ENCODE measurements at regions of chr9 and their contacts with region 1.

Region 1: DNA sequence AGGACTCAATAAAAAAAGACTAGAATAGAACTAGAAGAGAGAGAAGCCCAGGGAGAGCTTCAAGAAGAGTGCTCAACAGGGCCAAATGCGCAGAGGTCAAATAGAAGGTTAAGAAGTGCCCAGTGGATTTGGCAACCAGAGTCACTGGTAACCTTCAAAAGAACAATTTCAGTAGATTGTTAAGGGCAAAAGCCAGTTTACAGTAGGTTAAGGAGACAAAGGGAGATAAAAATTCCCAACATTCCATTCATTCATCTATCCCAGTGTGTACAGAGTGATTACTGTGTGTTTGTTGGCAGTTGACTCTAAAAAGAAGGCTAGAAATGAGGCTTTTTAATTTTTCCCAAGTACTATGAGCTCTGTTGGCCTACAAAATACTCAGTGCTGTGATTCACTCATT is 69.4 kb downstream of the RIGI start:
- DNase-seq: no peak
- H3K4me3 ChIP-seq: no peak overlapping the region
- H3K4me3 Mint-ChIP-seq: no peak overlapping the region
- H3K27ac ChIP-seq: no peak overlapping the region
- H3K27ac Mint-ChIP-seq: no peak overlapping the region
- H3K4me1 ChIP-seq: no peaks in the 10 kb centered on the region
- H3K4me1 Mint-ChIP-seq: peaks cover 0 to 2% (median 0%) of the 10 kb centered on the region in 4 donors
- H3K27me3 ChIP-seq: no peaks in the 10 kb centered on the region
- H3K27me3 Mint-ChIP-seq: no peaks in the 10 kb centered on the region

Region 2: GRCh38 chr9:32344551-32345182 is 111.9 kb before region 1 on chr9:
- CTCF ChIA-PET with region 1: no interaction called
- POLR2A ChIA-PET with region 1: no interaction called
- intact Hi-C with region 1: no loop called
- DNase-seq: no peak
- H3K4me3 ChIP-seq: no peak overlapping the region
- H3K4me3 Mint-ChIP-seq: peak overlapping the region in 7 of 8 donors; percentile 14 to 70 (median 41)
- H3K27ac ChIP-seq: no peak overlapping the region
- H3K27ac Mint-ChIP-seq: peak overlapping the region in 1 of 7 donors; percentile 62
- H3K4me1 ChIP-seq: peaks cover 18% of the 10 kb centered on the region
- H3K4me1 Mint-ChIP-seq: peaks cover 2 to 22% (median 18%) of the 10 kb centered on the region in 4 donors
- H3K27me3 ChIP-seq: no peaks in the 10 kb centered on the region
- H3K27me3 Mint-ChIP-seq: peaks cover 0 to 3% of the 10 kb centered on the region in 2 donors

Region 3: DNA sequence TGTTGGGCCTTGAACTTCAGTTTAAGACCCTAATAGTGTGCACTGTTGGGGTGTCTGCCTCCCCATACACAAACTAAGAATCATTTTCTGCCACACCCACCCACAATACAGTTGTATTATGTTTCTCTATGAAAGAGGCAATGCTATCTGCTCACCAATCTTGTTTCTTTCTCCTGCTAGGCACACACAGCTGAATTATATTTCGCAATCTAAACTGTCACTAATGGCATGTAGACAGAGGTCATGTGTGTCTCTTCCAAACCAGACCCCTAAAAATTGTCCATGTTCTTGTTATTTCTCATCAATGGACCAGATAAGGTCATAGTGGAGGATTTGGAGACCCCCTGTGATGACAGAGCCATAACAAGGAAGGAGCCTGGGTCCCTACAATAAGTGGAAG is 12.2 kb after region 1 on chr9:
- CTCF ChIA-PET with region 1: no interaction called
- POLR2A ChIA-PET with region 1: interaction called, 3 read pairs
- intact Hi-C with region 1: loop called (anchors 2 kb)
- DNase-seq: no peak
- H3K4me3 ChIP-seq: no peak overlapping the region
- H3K4me3 Mint-ChIP-seq: no peak overlapping the region
- H3K27ac ChIP-seq: no peak overlapping the region
- H3K27ac Mint-ChIP-seq: peak overlapping the region in 1 of 7 donors; percentile 12
- H3K4me1 ChIP-seq: no peaks in the 10 kb centered on the region
- H3K4me1 Mint-ChIP-seq: no peaks in the 10 kb centered on the region
- H3K27me3 ChIP-seq: no peaks in the 10 kb centered on the region
- H3K27me3 Mint-ChIP-seq: no peaks in the 10 kb centered on the region